Right ventricle myocardium inferior (tissue), 1 donor: ENCODE measurements at regions of chr5 and their contacts with region 1.

Region 1: DNA sequence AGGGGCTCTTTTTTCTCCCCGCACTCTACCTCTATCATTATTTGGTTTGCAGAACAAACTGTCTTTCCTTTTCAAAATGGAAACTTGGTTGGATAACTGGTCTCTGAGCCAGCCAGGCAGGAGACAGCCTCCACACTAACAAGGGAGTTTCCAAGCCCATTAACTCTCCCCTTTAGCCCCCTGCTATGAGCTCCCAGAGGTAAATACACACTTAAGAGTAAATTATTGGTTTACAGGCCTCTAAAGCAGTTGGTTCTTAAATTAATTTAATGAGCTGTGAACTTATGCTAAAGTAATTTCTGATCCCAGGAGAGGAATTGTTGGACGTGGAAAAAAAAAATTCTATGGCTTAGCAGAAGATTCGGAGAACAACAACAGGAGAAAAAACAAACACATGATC is 30.3 kb downstream of the EPB41L4A start:
- DNase-seq: no peak
- ATAC-seq: no peak

Region 2: DNA sequence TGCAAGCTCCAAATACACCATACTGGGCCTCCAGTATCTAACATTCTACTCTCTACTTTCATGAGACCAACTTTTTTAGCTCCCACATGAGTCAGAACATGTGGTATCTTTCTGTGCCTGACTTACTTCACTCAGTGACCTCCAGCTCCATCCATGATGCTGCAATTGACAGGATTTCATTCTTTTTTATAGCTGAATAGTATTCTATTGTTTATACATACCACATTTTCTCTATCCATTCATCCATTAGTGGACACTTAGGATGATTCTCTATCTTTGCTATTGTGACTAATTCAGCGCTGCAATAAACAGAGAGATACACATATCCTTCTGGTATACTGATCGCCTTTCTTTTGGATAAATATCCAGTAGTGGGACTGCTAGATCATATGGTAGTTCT is 38.1 kb before region 1 on chr5:
- intact Hi-C with region 1: loop called (anchors 5 kb)
- DNase-seq: no peak
- ATAC-seq: no peak

Region 3: GRCh38 chr5:113367586-113367985 is 978.8 kb after region 1 on chr5:
- intact Hi-C with region 1: no loop called
- DNase-seq: no peak
- ATAC-seq: no peak

Region 4: DNA sequence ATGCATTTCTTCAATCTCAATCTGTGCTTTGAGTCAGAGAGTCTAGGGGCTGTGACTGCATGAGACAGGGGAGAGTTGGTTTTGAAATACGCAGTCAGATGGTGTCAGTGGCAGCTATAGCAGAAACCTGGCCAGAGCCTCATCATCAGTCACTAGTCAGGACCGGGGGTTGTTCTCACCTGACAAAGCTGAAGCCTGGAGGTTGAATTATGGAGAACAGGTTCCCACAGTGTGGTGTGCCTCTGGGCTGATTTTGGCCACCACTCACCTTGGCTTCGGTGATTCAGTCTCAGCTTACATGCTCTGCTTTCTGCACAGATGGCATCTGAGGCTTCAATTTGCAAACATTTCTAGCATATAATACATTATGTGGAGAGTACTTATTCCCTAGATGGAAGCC is 1512.1 kb after region 1 on chr5:
- intact Hi-C with region 1: no loop called
- DNase-seq: no peak
- ATAC-seq: no peak